RWPE1 (cell line): ENCODE measurements at regions of chr4 and their contacts with region 1.

Region 1: DNA sequence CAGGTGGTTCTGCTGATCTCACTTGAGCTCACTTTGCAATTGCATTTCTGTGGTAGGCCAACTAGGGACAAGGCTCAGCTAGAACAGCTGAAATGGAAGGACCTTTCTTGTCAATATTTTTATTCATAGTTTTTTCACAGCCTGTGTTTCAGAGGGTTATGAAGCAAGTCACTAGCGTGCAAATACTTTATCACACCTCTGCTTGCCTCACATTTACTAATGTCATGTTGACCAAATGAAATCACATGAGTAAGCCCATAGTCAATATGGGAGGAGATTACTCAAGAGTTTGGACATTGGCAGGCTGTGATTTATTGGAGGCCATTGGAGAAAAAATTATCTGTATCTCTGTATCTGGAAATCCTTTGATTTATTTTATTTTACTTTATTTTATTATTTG is 628.3 kb upstream of the EPHA5 start:
- DNase-seq: no peak
- H3K27ac ChIP-seq: no peak overlapping the region
- CTCF ChIP-seq: no peak

Region 2: GRCh38 chr4:66225539-66225938 is 73.0 kb before region 1 on chr4:
- CTCF ChIA-PET with region 1: interaction called, 11 read pairs
- POLR2A ChIA-PET with region 1: no interaction called
- DNase-seq: no peak
- H3K27ac ChIP-seq: no peak overlapping the region
- CTCF ChIP-seq: no peak